OCI-LY7 (cell line): ENCODE measurements at regions of chr3 and their contacts with region 1.

Region 1: DNA sequence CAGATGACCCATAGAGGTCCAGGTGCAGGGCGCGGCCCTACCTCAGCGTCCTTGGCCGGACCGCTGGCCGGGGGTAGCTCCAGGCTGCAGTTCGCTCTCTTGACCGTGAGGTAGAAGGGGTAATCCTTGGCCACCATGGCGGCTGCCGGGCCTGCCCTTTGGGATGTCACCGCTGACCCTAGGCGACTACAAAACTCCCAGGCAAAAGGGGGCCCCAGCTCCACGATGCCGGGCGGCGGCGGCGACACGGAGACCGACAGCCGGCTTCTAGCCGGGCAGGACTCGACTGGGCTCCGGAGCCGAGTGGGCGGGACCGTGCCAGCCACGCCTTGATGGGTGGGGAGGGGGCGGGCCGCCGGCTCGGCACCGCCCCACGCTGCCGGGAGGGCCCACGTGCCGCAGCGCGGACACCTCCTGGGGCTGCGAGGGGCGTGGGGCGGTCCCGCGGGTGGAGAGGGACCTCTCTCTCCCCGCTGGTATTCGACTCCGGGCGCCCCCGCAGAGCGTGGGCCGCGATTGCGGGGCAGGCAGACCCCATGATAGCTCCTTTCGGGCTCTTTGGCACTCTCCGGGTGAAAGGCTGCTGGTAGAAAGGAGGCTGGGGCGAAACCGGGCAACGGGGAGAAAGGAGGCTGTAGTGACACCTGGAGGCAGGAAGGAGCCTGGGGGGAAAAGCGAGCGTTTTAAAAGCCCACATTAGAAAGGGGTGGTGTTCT is at the start of gene ARHGEF3:
- DNase-seq: peak; percentile 85
- H3K4me3 ChIP-seq: peak within 1 kb of the TSS; percentile 72
- H3K27ac ChIP-seq: peak within 1 kb of the TSS; percentile 47
- H3K4me1 ChIP-seq: peaks cover 44% of the 10 kb centered on the region
- CTCF ChIP-seq: peak; percentile 85
- total RNA-seq, gene ARHGEF3: 10.8 and 14.1 TPM in 2 replicates

Region 2: GRCh38 chr3:56702490-56703315 is 99.1 kb before region 1 on chr3:
- CTCF ChIA-PET with region 1: interaction called, 5 read pairs
- POLR2A ChIA-PET with region 1: interaction called, 18 read pairs
- intact Hi-C with region 1: loop called (anchors 1 kb)
- DNase-seq: peak; percentile 82
- H3K4me3 ChIP-seq: no peak overlapping the region
- H3K27ac ChIP-seq: no peak overlapping the region
- H3K4me1 ChIP-seq: peaks cover 11% of the 10 kb centered on the region
- CTCF ChIP-seq: peak; percentile 98

Region 3: DNA sequence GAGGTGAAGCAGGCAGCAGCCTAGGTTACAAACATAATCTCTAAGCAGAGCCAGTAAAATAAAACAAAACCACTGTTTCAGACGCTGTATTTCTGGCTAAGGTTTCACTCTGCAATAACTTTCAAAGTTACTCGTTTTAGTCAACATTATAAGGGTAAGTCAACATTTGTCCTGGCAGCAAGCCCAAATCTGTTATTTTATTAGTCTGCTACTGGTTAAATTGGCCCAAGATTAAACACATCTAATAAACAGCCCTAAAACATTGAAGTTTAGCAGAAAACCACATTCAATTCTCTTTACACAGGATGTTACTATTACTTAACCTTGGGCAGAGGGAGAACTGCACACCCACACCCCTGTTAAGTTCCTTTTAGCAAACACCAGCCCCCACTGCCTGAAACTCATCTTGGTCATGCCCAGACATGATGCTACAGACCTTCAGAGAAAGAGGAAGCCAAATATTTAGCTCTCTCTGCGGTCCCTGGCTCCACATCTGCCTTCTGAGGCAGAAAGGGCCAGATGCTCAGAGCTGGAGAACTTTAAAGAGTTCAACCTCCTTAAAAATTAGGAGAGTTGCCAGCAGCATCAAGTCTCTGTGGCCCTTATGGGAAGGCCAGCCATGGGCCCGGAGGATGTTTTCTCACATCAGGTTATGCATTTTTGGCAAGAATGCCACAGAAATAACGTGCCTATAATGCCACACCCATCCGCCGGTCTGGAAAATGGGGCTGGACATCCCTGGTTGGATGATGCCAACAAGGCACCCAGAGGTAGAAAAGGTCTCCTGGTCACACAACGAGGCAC is 18.0 kb before region 1 on chr3:
- CTCF ChIA-PET with region 1: interaction called, 4 read pairs
- POLR2A ChIA-PET with region 1: interaction called, 33 read pairs
- intact Hi-C with region 1: loop called (anchors 2 kb)
- DNase-seq: peak; percentile 89
- H3K4me3 ChIP-seq: peak overlapping the region; percentile 30
- H3K27ac ChIP-seq: peak overlapping the region; percentile 52
- H3K4me1 ChIP-seq: peaks cover 60% of the 10 kb centered on the region
- CTCF ChIP-seq: no peak

Region 4: GRCh38 chr3:56819016-56819809 is 17.4 kb after region 1 on chr3:
- CTCF ChIA-PET with region 1: no interaction called
- POLR2A ChIA-PET with region 1: interaction called, 12 read pairs
- intact Hi-C with region 1: no loop called
- DNase-seq: no peak
- H3K4me3 ChIP-seq: no peak overlapping the region
- H3K27ac ChIP-seq: no peak overlapping the region
- H3K4me1 ChIP-seq: peaks cover 15% of the 10 kb centered on the region
- CTCF ChIP-seq: no peak

Region 5: DNA sequence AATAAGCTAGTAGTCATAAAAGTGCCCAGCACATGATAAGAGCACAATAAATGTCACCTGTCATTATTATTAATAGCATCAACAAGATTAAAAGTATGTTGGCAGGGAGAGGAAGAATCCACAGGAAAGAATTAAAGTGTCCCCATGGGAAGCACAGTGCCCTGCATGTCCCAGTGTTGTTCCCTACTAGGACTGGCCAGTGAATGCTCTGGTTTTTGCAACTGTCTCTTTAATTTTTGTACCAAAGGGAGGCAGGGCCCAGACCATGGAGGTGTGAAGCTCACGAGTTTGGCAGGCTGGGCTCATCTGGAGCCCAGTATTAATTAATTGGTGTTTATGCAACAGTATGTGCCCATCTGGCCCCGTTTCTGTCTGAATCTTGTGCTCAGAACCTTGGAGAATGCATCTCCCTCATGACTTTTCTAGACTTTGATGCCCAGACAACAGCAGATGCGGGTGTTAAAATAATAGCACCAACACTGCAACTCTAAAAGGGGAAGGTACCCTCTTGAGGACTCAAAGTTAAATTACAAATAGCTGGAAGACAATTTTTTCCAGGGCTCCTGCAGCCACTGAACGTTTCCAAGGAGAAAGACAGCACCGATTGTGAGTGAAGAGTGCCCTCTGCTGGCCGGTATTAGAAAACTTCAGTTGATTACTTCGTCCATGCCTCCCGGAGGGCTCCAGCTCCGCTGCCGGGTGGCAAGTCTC is 186.8 kb after region 1 on chr3:
- CTCF ChIA-PET with region 1: interaction called, 6 read pairs
- POLR2A ChIA-PET with region 1: interaction called, 11 read pairs
- intact Hi-C with region 1: loop called (anchors 1 kb)
- DNase-seq: peak; percentile 78
- H3K4me3 ChIP-seq: no peak overlapping the region
- H3K27ac ChIP-seq: no peak overlapping the region
- H3K4me1 ChIP-seq: peaks cover 40% of the 10 kb centered on the region
- CTCF ChIP-seq: peak; percentile 99

Region 6: DNA sequence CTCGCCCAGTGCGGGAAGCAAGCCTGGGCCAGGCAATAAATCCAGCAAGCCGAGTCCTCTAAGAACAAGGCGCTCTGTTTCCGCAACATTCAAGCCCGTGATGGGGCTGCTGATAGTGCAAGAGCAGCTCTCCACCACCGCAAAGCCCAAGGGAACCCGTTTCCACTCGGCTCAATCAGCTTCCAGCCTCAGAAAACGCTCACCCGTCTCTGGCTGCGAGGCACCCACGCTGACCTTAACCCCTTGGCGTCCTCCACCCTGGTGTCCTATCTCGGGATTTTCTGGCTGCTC is 276.5 kb after region 1 on chr3:
- CTCF ChIA-PET with region 1: no interaction called
- POLR2A ChIA-PET with region 1: interaction called, 3 read pairs
- intact Hi-C with region 1: loop called (anchors 10 kb)
- DNase-seq: peak; percentile 84
- H3K4me3 ChIP-seq: peak overlapping the region; percentile 98
- H3K27ac ChIP-seq: peak overlapping the region; percentile 48
- H3K4me1 ChIP-seq: peaks cover 60% of the 10 kb centered on the region
- CTCF ChIP-seq: no peak